CD8-positive, alpha-beta memory T cell (primary cell): ENCODE measurements at regions of chr12 and their contacts with region 1.

Region 1: GRCh38 chr12:122123051-122123760 is 44.6 kb downstream of the MLXIP start:
- DNase-seq: peak; percentile 56 to 77 (median 62)
- H3K4me3 ChIP-seq: no peak overlapping the region
- H3K4me3 Mint-ChIP-seq: peak overlapping the region in 4 of 7 donors; percentile 11 to 67 (median 34)
- H3K27ac ChIP-seq: no peak overlapping the region
- H3K27ac Mint-ChIP-seq: peak overlapping the region in 5 of 8 donors; percentile 4 to 91 (median 36)
- H3K4me1 ChIP-seq: peaks cover 11% of the 10 kb centered on the region
- H3K4me1 Mint-ChIP-seq: peaks cover 22 to 44% (median 23%) of the 10 kb centered on the region in 3 donors
- H3K27me3 ChIP-seq: no peaks in the 10 kb centered on the region
- H3K27me3 Mint-ChIP-seq: no peaks in the 10 kb centered on the region

Region 2: DNA sequence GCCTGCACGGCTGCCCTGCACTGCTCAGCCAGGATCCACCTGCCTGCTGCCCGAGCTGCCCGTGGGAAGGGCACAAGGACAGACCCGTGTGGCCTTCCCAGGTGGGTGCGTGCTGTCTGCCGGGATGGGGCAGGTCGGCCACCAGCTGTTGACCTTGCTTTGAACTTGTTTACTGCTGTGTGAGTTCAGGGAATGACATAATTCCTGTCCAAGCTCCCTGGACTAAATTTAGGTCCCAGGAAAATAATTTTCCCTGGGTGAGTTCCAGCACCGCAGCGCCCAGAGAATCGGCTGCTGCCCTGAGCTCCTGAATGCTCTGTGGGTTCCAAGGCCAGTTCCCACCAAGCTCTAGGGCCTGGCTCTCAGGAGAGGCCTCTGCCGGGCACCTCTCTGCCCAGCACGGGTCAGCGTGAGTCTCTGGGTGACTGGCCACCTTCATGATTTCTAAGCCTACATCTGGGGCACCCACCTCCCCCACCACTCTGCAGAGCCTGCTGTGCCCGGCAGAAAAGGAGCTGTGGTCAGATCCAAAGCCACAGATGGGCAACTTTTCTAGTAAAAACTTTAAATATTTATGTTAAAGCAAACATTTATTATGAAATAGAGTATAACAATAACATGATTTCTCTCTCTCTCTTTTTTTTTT is 71.9 kb before region 1 on chr12:
- CTCF ChIA-PET with region 1: interaction called, 94 read pairs
- POLR2A ChIA-PET with region 1: no interaction called
- DNase-seq: no peak
- H3K4me3 ChIP-seq: no peak overlapping the region
- H3K4me3 Mint-ChIP-seq: no peak overlapping the region
- H3K27ac ChIP-seq: no peak overlapping the region
- H3K27ac Mint-ChIP-seq: no peak overlapping the region
- H3K4me1 ChIP-seq: peaks cover 3% of the 10 kb centered on the region
- H3K4me1 Mint-ChIP-seq: peaks cover 0 to 7% (median 2%) of the 10 kb centered on the region in 3 donors
- H3K27me3 ChIP-seq: no peaks in the 10 kb centered on the region
- H3K27me3 Mint-ChIP-seq: no peaks in the 10 kb centered on the region

Region 3: DNA sequence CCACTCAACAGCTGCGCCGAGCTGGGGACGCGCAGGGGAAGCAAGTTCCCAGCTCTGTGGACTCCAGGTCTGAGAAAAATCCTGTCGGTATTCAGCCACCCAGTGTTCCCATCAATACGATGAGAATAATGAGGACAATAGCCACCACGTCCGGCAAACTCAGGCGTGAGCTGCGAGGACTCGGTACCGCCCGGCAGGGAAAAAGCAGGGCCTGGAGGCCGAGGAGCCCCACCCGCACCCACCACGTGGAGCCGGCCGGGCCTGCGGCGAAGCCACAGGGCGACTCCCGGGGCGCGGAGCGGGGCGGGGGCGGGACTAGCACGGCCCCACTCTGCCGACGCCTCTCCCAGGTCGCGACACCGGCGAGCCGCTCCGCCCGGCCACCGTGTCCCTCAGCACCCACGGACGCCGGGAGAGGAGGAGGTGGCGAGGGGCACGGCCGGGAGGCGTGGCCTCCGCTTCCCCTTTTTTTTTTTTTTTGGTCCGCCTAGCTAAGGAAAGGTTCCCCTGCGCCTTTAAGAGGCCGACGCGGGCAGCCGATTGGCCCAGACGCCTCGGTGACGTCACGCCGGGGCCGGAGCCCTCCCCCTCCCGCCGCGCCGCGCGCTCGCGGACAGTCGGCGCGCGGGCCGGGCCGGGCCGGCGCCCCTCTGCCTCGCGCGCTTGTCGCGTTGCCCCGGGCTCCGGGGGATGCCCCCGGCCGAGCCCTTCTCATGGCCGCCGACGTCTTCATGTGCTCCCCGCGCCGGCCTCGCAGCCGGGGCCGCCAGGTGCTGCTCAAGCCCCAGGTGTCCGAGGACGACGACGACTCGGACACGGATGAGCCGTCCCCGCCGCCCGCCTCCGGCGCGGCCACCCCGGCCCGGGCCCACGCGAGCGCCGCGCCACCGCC is 44.8 kb before region 1 on chr12 and contains the start of gene MLXIP:
- CTCF ChIA-PET with region 1: interaction called, 35 read pairs
- POLR2A ChIA-PET with region 1: no interaction called
- DNase-seq: peak; percentile 83 to 91 (median 84)
- H3K4me3 ChIP-seq: peak within 1 kb of the TSS; percentile 73
- H3K4me3 Mint-ChIP-seq: peak within 1 kb of the TSS; percentile 87 to 98 (median 96)
- H3K27ac ChIP-seq: peak within 1 kb of the TSS; percentile 84
- H3K27ac Mint-ChIP-seq: peak within 1 kb of the TSS; percentile 87 to 97 (median 91)
- H3K4me1 ChIP-seq: peaks cover 38% of the 10 kb centered on the region
- H3K4me1 Mint-ChIP-seq: peaks cover 40 to 49% (median 43%) of the 10 kb centered on the region in 3 donors
- H3K27me3 ChIP-seq: no peaks in the 10 kb centered on the region
- H3K27me3 Mint-ChIP-seq: peaks cover 0 to 3% of the 10 kb centered on the region in 2 donors
- total RNA-seq, gene MLXIP: 32.1 to 33.9 TPM

Region 4: GRCh38 chr12:122097927-122098756 is 25.1 kb before region 1 on chr12:
- CTCF ChIA-PET with region 1: interaction called, 14 read pairs
- POLR2A ChIA-PET with region 1: no interaction called
- DNase-seq: no peak
- H3K4me3 ChIP-seq: no peak overlapping the region
- H3K4me3 Mint-ChIP-seq: peak overlapping the region in 5 of 7 donors; percentile 33 to 59 (median 47)
- H3K27ac ChIP-seq: peak overlapping the region; percentile 62
- H3K27ac Mint-ChIP-seq: peak overlapping the region; percentile 66 to 89 (median 84)
- H3K4me1 ChIP-seq: peaks cover 68% of the 10 kb centered on the region
- H3K4me1 Mint-ChIP-seq: peaks cover 50 to 68% (median 65%) of the 10 kb centered on the region in 3 donors
- H3K27me3 ChIP-seq: no peaks in the 10 kb centered on the region
- H3K27me3 Mint-ChIP-seq: no peaks in the 10 kb centered on the region

Region 5: DNA sequence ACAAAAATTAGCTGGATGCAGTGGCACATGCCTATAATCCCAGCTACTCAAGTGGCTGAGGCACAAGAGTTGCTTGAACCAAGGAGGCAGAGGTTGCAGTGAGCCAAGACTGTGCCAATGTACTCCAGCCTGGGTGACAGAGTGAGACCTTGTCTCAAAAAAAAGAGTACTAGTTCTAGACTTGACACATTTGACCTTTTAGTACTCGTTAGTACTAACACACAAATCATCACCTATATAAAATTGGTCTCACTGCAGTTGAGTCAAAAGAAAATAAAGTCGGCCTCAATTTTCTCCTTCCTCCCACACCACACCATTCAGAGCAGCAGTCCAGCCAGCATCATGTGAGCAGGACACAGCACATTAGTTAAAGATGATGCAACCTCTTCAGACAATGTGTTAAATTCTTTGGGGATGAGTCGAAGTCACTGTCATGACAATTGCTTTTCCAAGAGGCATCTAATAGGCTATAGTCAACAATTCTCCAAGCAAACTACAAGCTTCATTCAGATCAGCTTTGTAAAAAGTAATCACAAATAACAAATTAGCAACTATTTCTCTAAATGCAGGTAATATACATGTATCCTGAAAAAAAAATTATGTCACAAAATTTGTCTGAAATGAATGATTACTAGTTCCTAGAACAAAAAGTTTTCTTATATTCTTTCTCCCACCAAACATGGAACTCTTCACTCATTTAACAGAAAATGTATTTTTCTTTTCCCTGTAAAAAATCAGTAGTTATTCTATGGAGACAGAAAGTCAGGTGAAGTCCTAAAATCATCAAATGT is 243.7 kb after region 1 on chr12:
- CTCF ChIA-PET with region 1: no interaction called
- POLR2A ChIA-PET with region 1: no interaction called
- DNase-seq: no peak
- H3K4me3 ChIP-seq: no peak overlapping the region
- H3K4me3 Mint-ChIP-seq: no peak overlapping the region
- H3K27ac ChIP-seq: peak overlapping the region; percentile 44
- H3K27ac Mint-ChIP-seq: peak overlapping the region in 4 of 8 donors; percentile 2 to 66 (median 38)
- H3K4me1 ChIP-seq: no peaks in the 10 kb centered on the region
- H3K4me1 Mint-ChIP-seq: peaks cover 12 to 32% (median 22%) of the 10 kb centered on the region in 3 donors
- H3K27me3 ChIP-seq: no peaks in the 10 kb centered on the region
- H3K27me3 Mint-ChIP-seq: no peaks in the 10 kb centered on the region